Heart left ventricle (tissue), 16 donors: ENCODE measurements at regions of chr10 and their contacts with region 1.

Region 1: GRCh38 chr10:103618575-103619423 is 125.3 kb downstream of the NEURL1 start:
- DNase-seq: peak; percentile 72 to 87 (median 76)
- ATAC-seq: peak; percentile 32 to 69 (median 47)
- H3K4me3 ChIP-seq: no peak overlapping the region
- H3K27ac ChIP-seq: peak overlapping the region in 11 of 12 donors; percentile 29 to 73 (median 64)
- H3K4me1 ChIP-seq: peaks cover 8 to 92% (median 74%) of the 10 kb centered on the region in 12 donors
- H3K27me3 ChIP-seq: no peaks in the 10 kb centered on the region
- CTCF ChIP-seq: no peak
- POLR2A ChIP-seq: no peak

Region 2: DNA sequence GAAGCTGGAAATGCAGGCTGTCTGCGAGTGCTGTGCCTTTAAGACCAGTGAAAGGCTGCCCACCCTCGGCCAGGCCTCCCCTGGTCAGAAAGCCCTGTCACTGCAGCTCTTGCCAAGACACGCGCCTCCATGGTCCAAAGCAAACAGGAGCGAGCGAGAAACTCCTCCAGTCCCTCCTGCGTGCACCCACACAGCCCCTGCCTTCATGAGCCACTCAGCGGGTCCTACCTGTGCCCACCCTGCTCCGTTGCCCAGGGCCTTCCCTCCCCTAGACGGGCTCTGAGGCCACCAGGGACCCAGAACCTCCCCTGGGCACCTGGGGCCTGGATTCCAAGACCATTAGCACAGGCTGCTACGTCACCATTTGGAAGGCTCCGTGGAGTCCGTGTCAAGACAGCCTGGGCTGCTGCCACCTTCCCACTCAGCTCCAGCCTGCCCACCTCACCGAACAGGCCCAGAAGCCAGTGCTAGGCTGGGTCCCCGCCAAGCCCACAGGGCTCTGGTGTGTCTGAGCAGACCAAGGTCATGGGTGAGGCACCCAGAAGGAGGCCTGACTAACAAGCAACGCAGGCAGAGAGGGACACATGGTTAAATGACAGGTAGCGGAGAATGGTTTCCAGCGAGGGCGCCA is 19.2 kb after region 1 on chr10:
- intact Hi-C with region 1: loop called in 1 of 10 experiments (anchors 2 kb)
- DNase-seq: peak; percentile 69 to 93 (median 87)
- ATAC-seq: peak; percentile 68 to 90 (median 82)
- H3K4me3 ChIP-seq: peak overlapping the region in 2 of 12 donors; percentile 14 to 18
- H3K27ac ChIP-seq: peak overlapping the region; percentile 42 to 90 (median 79)
- H3K4me1 ChIP-seq: peaks cover 18 to 68% (median 52%) of the 10 kb centered on the region in 12 donors
- H3K27me3 ChIP-seq: no peaks in the 10 kb centered on the region
- CTCF ChIP-seq: no peak
- POLR2A ChIP-seq: no peak

Region 3: GRCh38 chr10:103659674-103660363 is 41.0 kb after region 1 on chr10:
- intact Hi-C with region 1: loop called in 3 of 10 experiments (anchors 5 kb)
- DNase-seq: peak; percentile 70 to 80 (median 76)
- ATAC-seq: peak; percentile 77 to 90 (median 78)
- H3K4me3 ChIP-seq: peak overlapping the region; percentile 38 to 74 (median 61)
- H3K27ac ChIP-seq: peak overlapping the region; percentile 79 to 97 (median 90)
- H3K4me1 ChIP-seq: peaks cover 0 to 55% (median 31%) of the 10 kb centered on the region in 12 donors
- H3K27me3 ChIP-seq: no peaks in the 10 kb centered on the region
- CTCF ChIP-seq: peak in 1 of 12 donors; percentile 7
- POLR2A ChIP-seq: no peak

Region 4: DNA sequence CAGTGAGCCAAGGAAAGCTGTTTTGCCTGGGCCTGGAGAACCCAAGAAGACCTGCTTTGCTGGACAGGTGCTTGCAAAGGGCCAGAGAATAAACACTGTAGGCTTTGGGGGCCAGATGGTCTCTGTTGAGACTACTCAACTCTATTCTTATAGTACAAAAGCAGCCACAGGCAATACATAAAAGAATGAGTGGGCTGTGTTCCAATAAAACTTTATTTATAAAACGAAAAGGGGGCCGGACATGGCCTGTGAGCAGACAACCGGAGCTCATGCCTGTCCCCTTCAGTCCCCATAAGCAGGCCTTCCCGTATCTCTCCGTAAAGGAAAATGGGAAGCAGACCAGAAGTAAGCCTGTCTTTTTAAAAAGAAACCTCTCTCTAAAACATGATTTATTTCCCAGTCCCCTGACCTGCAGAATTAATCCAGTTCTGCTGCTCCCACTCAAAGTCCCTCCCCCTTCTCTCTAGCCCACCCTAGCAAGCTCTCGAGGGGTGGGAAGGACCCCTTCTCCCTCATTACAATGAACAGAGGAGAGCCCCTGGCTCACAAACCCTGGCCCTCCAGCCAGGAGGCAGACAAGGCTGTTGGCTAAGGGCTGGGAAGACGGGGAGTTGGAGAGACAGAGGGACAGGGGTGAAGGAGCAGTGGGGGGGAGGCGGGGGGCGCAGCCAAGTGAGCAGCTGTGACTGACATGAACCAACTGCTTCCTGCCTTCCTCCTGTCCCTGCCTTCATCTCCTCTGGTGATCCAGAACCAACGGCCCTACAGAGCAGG is 52.5 kb after region 1 on chr10:
- intact Hi-C with region 1: loop called in 4 of 10 experiments (anchors 2 to 5 kb)
- DNase-seq: no peak
- ATAC-seq: no peak
- H3K4me3 ChIP-seq: no peak overlapping the region
- H3K27ac ChIP-seq: peak overlapping the region in 1 of 12 donors; percentile 4
- H3K4me1 ChIP-seq: peaks cover 3 to 62% (median 38%) of the 10 kb centered on the region in 12 donors
- H3K27me3 ChIP-seq: no peaks in the 10 kb centered on the region
- CTCF ChIP-seq: no peak
- POLR2A ChIP-seq: no peak